KBM-7 (cell line): ENCODE measurements at regions of chr12 and their contacts with region 1.

Region 1: DNA sequence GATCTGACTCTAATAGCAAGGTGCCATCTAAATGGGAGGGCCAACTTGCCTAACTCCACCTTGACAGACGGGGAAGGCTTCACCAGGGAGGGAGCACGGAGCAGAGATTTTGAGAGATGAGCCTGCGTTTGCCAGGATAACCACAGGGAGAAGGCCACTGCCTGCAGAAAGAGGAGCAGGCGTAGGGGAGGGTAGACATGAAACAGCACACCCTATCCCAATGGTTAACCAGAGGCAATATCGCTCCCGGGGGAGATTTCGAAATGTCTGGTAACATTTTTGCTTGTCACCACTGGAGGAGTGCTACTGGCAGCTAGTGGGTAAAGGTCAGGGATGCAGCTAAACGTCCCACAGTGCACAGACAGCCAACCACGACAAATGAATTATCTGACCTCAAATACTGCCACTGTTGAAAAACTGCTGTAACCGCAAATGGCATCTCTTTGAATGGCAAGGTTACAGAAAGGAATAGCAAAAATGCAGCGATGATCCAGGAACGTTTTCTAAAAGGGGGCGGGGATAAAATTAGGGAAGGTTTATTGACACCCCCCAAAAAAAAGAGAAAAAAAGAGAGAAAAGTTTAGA is 126.0 kb upstream of the ATF7IP start:
- DNase-seq: peak; percentile 89

Region 2: DNA sequence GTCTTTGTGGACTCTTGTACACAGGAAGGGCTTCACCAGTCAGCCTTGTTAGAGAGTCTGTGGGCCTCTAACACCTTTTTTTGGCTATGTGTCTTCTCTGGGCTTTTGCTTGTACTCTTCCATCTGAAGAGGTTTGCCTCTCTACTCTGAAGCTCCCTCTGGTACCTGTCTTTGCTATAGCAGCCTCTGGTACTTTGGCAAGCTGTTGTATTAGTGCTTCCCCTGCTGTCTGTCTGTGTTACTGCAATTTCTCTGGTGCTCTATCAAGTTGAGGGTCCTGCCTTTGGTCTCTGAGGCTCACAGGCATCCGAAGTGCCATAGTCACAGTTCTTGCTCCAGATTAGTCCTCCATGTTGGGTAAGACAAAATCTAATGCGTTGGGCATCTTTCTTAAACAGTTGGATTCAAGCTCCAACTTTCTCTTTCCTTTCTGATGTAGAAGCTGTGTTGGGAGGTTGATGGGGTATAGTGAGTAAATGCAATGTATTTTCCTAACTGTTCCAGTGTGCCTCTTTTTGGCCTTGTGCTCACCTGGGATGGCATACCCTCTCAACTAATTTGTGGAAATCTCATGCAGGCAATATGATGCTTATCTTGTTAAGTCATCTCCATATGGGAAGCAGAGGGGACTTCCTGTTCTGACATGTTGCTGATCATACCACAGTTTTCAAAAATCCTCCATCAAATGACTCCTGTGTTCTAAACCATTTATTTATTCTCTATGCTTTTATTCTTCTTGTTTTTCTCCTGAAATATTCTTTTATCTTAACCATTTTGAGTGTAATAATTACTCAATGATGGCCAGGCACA is 214.9 kb after region 1 on chr12:
- in situ Hi-C with region 1: loop called (anchors 25 kb)
- DNase-seq: peak; percentile 81